PC-9 (cell line): ENCODE measurements at regions of chr5 and their contacts with region 1.

Region 1: GRCh38 chr5:399296-400281 is 43.4 kb upstream of the EXOC3 start:
- DNase-seq: peak in 1 of 2 experiments; percentile 91
- H3K4me3 ChIP-seq: no peak overlapping the region
- H3K27ac ChIP-seq: no peak overlapping the region
- H3K4me1 ChIP-seq: peaks cover 11% of the 10 kb centered on the region
- H3K27me3 ChIP-seq: no peaks in the 10 kb centered on the region
- CTCF ChIP-seq: no peak

Region 2: DNA sequence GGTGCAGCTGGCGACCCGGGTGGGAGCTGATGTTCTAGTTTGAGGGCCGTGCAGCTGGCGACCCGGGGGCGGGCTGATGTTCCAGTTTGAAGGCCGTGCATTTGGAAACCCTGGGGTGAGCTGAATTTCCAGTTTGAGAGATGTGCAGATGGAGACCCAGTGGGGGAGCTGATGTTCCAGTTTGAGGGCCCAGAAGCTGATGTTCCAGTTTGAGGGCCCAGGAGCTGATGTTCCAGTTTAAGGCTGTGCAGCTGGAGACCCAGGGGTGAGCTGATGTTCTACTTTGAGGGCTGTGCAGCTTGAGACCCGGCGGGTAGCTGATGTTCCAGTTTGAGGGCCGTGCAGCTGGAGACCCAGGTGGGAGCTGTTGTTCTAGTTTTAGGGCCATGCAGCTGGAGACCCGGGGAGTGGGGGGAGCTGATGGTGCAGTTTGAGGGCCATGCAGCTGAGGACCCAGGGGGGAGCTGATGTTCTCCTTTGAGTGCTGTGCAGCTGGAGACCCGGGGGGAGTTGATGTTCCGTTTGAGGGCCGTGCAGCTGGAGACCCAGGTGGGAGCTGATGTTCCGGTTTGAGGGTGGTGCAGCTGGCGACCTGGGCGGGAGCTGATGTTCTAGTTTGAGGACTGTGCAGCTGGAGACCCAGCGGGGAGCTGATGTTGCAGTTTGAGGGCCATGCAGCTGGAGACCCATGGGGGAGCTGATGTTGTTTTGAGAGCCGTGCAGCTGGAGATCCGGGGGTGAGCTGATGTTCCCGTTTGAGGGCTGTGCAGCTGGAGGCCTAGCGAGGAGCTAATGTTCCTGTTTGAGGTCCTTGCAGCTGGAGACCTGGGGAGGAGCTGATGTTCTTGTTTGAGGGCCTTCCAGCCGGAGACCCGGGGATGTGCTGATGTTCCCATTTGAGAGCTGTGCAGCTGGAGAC is 113.7 kb before region 1 on chr5:
- CTCF ChIA-PET with region 1: interaction called, 12 read pairs
- POLR2A ChIA-PET with region 1: interaction called, 5 read pairs
- intact Hi-C with region 1: no loop called
- DNase-seq: no peak
- H3K4me3 ChIP-seq: no peak overlapping the region
- H3K27ac ChIP-seq: no peak overlapping the region
- H3K4me1 ChIP-seq: no peaks in the 10 kb centered on the region
- H3K27me3 ChIP-seq: no peaks in the 10 kb centered on the region
- CTCF ChIP-seq: no peak

Region 3: GRCh38 chr5:298737-299125 is 100.9 kb before region 1 on chr5:
- CTCF ChIA-PET with region 1: no interaction called
- POLR2A ChIA-PET with region 1: no interaction called
- intact Hi-C with region 1: no loop called
- DNase-seq: no peak
- H3K4me3 ChIP-seq: no peak overlapping the region
- H3K27ac ChIP-seq: no peak overlapping the region
- H3K4me1 ChIP-seq: no peaks in the 10 kb centered on the region; the same call in 1 of the 2 replicates
- H3K27me3 ChIP-seq: no peaks in the 10 kb centered on the region
- CTCF ChIP-seq: no peak

Region 4: DNA sequence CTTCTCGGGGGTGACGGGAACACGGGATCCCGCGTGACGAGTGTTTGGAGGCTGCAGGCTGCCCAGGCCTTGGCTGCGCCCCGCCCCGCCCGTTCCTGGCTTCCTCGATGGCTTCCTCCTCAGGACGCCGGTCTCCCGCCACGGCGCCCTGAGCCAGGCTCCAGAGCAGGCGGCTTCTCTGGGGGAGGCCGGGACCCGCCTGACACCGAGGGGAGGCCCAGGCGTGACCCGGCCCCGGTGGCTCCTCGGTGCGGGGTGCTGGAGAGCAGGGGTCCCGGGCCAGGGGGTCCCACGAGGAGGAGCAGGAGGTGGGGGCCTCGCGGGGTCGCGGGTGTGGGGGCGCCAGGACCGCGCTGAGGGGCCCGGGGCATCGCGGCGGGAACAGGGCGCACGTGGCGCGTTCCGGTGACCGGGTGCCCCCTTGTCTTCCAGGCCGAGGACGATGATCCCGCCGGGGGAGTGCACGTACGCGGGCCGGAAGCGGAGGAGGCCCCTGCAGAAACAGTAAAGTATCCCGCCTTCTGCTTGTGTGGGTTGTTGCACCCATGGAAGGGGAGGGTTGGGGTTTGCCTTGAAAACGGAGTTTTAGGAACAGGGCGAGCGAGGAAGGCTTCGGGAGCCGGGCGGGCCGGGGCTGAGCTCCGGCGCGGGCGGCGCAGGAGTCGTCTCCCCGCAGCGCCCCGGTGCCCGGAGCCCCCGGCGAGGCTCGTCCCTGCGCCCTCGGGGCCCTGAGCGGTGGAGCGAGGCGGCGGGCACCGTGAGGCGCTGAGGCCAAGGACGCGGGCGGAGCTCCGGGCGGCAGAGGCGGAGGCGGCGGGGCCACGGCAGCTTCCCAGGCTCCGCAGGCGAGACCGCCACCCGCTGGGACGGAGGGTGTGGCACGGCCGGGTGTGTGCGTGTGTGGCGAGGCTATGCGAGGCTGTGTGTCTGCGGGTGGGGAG is 55.9 kb before region 1 on chr5:
- CTCF ChIA-PET with region 1: no interaction called
- POLR2A ChIA-PET with region 1: no interaction called
- intact Hi-C with region 1: no loop called
- DNase-seq: peak in 1 of 2 experiments; percentile 69
- H3K4me3 ChIP-seq: no peak overlapping the region
- H3K27ac ChIP-seq: no peak overlapping the region
- H3K4me1 ChIP-seq: no peaks in the 10 kb centered on the region
- H3K27me3 ChIP-seq: no peaks in the 10 kb centered on the region
- CTCF ChIP-seq: no peak

Region 5: DNA sequence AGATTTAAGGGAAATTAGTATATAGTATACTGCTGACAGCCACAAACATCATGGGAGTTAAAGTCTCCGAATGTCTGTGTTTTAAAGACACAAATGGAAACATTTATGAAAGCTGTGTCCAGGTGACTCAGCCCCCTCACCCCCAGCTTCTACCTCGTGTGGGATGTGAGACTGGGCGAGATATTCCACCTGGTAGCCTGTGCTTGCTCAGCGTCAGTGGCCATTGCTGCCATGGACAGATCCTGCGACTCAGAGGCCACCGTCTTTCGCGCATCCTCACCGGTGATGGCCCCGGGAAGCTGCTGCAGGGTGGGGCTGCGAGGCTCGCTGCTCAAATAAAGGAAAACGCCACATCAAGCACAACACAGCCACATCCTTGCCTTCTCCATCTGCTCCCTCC is 12.1 kb after region 1 on chr5:
- CTCF ChIA-PET with region 1: no interaction called
- POLR2A ChIA-PET with region 1: interaction called, 7 read pairs
- intact Hi-C with region 1: loop called (anchors 1 kb)
- DNase-seq: no peak
- H3K4me3 ChIP-seq: no peak overlapping the region
- H3K27ac ChIP-seq: no peak overlapping the region
- H3K4me1 ChIP-seq: no peaks in the 10 kb centered on the region
- H3K27me3 ChIP-seq: no peaks in the 10 kb centered on the region
- CTCF ChIP-seq: no peak

Region 6: DNA sequence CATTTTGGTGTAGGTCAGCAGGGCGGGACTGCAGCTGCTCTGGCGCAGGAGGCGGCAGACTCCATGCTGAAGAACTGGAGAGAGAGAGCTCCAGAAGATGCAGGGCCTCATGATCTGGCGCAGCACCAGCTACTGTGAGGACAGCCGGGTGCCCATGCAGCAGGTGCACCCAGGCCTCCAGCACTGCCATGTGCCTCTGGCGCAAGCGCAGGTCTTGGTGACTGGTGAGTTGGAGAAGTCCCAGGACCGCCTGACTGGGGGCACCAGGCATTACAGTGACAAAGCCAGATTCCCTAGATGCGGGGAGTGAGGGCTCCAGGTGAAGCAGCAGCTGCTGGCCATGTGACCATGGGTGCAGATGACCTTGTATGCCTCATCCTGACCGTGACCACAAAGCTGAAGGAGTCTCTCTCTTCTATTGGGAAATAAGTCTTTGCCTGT is 19.1 kb after region 1 on chr5:
- CTCF ChIA-PET with region 1: no interaction called
- POLR2A ChIA-PET with region 1: interaction called, 7 read pairs
- intact Hi-C with region 1: loop called (anchors 1 kb)
- DNase-seq: no peak
- H3K4me3 ChIP-seq: no peak overlapping the region
- H3K27ac ChIP-seq: no peak overlapping the region
- H3K4me1 ChIP-seq: no peaks in the 10 kb centered on the region
- H3K27me3 ChIP-seq: no peaks in the 10 kb centered on the region
- CTCF ChIP-seq: no peak